ENCODE measurements at regions of chr20 and their contacts with region 1.

Region 1: DNA sequence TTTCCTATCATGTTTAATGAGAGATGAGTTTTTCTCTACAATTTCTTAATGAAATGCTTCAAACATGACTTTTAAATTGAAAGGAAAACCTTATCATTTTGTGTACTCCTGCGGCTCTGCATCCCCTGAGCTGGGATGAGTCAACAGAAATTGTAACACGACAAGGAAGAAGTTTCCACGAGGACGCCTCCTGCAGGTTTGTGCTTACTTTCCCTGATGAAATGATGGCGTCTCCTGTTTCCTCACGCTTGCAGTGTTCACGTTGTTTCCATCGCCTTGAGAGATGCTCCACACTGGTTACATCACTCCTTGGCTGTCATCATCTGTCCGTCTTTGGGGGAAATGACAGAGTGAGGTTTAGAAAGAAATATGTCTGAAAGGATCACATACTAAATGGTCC is 233.7 kb upstream of the ZFP64 start:
- DNase-seq: no peak
- ATAC-seq: no peak
- H3K4me3 ChIP-seq: no peak overlapping the region
- H3K4me3 Mint-ChIP-seq: no peak overlapping the region
- H3K27ac ChIP-seq: no peak overlapping the region
- H3K27ac Mint-ChIP-seq: no peak overlapping the region
- H3K4me1 ChIP-seq: no peaks in the 10 kb centered on the region
- H3K4me1 Mint-ChIP-seq: peaks cover 6% of the 10 kb centered on the region
- H3K27me3 ChIP-seq: no peaks in the 10 kb centered on the region
- H3K27me3 Mint-ChIP-seq: no peaks in the 10 kb centered on the region
- CTCF ChIP-seq: no peak

Region 2: GRCh38 chr20:53092772-53093300 is 667.6 kb after region 1 on chr20:
- CTCF ChIA-PET with region 1: no interaction called
- POLR2A ChIA-PET with region 1: no interaction called
- intact Hi-C with region 1: loop called in 1 of 2 experiments (anchors 5 kb)
- DNase-seq: no peak
- ATAC-seq: no peak
- H3K4me3 ChIP-seq: no peak overlapping the region
- H3K4me3 Mint-ChIP-seq: no peak overlapping the region
- H3K27ac ChIP-seq: no peak overlapping the region
- H3K27ac Mint-ChIP-seq: no peak overlapping the region
- H3K4me1 ChIP-seq: no peaks in the 10 kb centered on the region
- H3K4me1 Mint-ChIP-seq: peaks cover 23% of the 10 kb centered on the region
- H3K27me3 ChIP-seq: no peaks in the 10 kb centered on the region
- H3K27me3 Mint-ChIP-seq: no peaks in the 10 kb centered on the region
- CTCF ChIP-seq: no peak